ENCODE measurements at regions of chr18 and their contacts with region 1.

Region 1: DNA sequence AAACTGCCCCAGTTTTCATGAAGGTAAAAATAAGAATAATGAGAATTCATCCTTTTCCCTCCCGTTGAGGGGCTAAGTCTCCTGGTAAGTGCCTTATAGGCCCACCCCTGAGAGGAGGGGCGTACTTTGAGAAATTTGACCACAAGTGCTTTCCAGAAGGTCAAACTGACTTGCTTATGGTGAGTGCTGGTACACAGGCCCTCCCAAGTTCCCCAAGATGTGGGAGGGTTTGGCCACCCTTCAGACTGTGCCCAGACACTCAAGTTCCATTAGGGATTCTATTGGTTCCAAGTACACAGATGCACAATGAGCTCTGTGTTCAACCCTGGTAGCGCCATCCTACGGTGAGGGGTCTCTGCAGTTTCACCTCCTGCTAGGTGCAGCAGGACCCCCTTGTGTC is 205.1 kb downstream of the CTIF start:
- DNase-seq: no peak
- ATAC-seq: no peak
- H3K4me3 ChIP-seq: no peak overlapping the region
- H3K27ac ChIP-seq: peak overlapping the region in 3 of 4 donors; percentile 7 to 14 (median 10)
- H3K4me1 ChIP-seq: peaks cover 4 to 20% of the 10 kb centered on the region in 2 donors
- H3K27me3 ChIP-seq: no peaks in the 10 kb centered on the region
- CTCF ChIP-seq: no peak
- POLR2A ChIP-seq: no peak

Region 2: GRCh38 chr18:48475635-48476549 is 268.0 kb before region 1 on chr18:
- in situ Hi-C with region 1: no loop called
- intact Hi-C with region 1: no loop called
- DNase-seq: peak in 1 of 2 donors; percentile 29
- ATAC-seq: peak; percentile 84 to 90
- H3K4me3 ChIP-seq: no peak overlapping the region
- H3K27ac ChIP-seq: no peak overlapping the region
- H3K4me1 ChIP-seq: no peaks in the 10 kb centered on the region
- H3K27me3 ChIP-seq: no peaks in the 10 kb centered on the region
- CTCF ChIP-seq: peak; percentile 66 to 87 (median 83)
- POLR2A ChIP-seq: no peak

Region 3: GRCh38 chr18:48711651-48712486 is 32.0 kb before region 1 on chr18:
- in situ Hi-C with region 1: no loop called
- intact Hi-C with region 1: loop called (anchors 2 kb)
- DNase-seq: peak in 1 of 2 donors; percentile 42
- ATAC-seq: peak; percentile 44 to 45
- H3K4me3 ChIP-seq: no peak overlapping the region
- H3K27ac ChIP-seq: peak overlapping the region in 1 of 4 donors; percentile 37
- H3K4me1 ChIP-seq: peaks cover 26 to 31% of the 10 kb centered on the region in 2 donors
- H3K27me3 ChIP-seq: no peaks in the 10 kb centered on the region
- CTCF ChIP-seq: peak; percentile 29 to 49 (median 41)
- POLR2A ChIP-seq: no peak